ENCODE measurements at regions of chr6 and their contacts with region 1.

Region 1: GRCh38 chr6:155188707-155189496 is 74.9 kb upstream of the CLDN20 start:
- DNase-seq: no peak
- H3K4me3 ChIP-seq: peak overlapping the region in 1 of 2 donors; percentile 17
- H3K27ac ChIP-seq: peak overlapping the region; percentile 17 to 36
- H3K4me1 ChIP-seq: peaks cover 0 to 19% of the 10 kb centered on the region in 2 donors
- H3K27me3 ChIP-seq: no peaks in the 10 kb centered on the region
- CTCF ChIP-seq: no peak

Region 2: GRCh38 chr6:155228546-155229166 is 39.8 kb after region 1 on chr6:
- intact Hi-C with region 1: loop called (anchors 5 kb)
- DNase-seq: no peak
- H3K4me3 ChIP-seq: peak overlapping the region; percentile 18 to 48
- H3K27ac ChIP-seq: peak overlapping the region; percentile 39 to 50
- H3K4me1 ChIP-seq: peaks cover 0 to 5% of the 10 kb centered on the region in 2 donors
- H3K27me3 ChIP-seq: no peaks in the 10 kb centered on the region
- CTCF ChIP-seq: no peak